ENCODE measurements at regions of chr1 and their contacts with region 1.

Region 1: GRCh38 chr1:206808615-206809014 is 36.3 kb upstream of the IL10 start:
- DNase-seq: no peak
- H3K4me3 ChIP-seq: no peak overlapping the region
- CTCF ChIP-seq: peak; percentile 49

Region 2: DNA sequence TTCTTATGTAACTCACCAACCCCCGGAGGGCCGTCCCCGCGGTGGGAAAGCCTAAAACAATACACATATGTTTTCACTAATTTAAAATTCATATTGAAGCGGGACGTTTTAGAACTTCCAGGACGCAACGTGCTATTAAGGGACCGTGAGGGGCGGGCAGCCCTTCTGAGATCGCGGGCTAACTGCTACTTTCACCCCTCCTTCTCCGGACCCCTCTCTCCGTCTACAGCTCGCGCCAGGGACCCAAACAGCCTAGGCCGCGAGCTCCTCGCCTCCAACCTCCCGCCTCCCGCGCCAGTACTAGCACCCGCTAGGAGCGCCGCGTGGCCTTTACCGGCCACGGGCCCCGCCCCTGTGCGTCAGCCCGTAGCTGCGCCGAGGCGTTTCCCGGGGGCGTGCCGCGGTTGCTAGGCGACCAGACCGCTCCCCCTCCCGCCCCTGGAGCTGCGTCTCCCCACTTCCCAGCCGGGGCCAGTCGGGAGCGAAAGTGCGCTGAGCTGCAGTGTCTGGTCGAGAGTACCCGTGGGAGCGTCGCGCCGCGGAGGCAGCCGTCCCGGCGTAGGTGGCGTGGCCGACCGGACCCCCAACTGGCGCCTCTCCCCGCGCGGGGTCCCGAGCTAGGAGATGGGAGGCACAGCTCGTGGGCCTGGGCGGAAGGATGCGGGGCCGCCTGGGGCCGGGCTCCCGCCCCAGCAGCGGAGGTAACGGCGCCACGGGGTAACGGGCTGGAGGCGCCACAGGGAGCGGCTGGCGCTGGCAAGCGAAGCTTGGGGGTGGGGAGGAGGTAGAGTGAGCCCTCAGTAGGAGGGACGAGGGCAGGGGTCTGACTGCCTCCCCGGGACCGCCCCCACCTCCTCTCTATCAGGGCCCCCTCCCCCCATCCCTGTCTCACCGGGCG is 173.3 kb before region 1 on chr1 and contains the start of gene DYRK3:
- CTCF ChIA-PET with region 1: interaction called, 15 read pairs
- POLR2A ChIA-PET with region 1: no interaction called
- DNase-seq: no peak
- H3K4me3 ChIP-seq: peak within 1 kb of the TSS; percentile 86
- CTCF ChIP-seq: no peak

Region 3: DNA sequence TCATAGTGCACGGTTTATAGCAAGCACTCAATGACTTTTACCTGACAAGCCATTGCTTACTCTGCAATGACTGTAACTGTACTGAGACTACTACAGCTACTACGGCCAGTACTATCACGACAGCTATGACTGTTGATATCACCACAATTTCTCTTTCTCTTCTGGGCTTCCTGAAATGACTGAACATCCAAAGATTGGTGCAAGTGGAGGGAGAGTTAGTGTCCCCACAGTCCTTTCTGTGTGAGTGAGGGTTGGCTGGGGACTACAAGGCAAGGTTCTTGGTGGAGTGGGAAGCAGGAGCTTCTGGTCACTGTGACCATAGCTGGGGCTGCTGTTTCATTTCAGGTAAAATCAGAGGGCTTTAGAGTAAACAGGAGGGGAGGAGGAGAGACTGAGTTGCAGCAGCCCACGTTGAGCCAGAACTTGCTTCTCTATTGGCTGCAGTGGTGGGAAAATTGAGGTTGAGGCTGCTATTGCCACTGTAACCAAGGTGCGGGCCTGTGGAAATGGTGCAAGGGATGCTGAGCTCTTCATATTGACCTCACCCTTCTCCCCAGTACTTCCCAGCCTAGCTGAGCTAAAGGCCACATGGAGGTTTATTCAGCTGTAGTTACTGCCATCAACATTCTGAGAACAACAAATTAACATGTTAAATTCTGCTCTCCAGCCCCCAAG is 22.3 kb before region 1 on chr1:
- CTCF ChIA-PET with region 1: interaction called, 11 read pairs
- POLR2A ChIA-PET with region 1: no interaction called
- DNase-seq: no peak
- H3K4me3 ChIP-seq: no peak overlapping the region
- CTCF ChIP-seq: no peak

Region 4: DNA sequence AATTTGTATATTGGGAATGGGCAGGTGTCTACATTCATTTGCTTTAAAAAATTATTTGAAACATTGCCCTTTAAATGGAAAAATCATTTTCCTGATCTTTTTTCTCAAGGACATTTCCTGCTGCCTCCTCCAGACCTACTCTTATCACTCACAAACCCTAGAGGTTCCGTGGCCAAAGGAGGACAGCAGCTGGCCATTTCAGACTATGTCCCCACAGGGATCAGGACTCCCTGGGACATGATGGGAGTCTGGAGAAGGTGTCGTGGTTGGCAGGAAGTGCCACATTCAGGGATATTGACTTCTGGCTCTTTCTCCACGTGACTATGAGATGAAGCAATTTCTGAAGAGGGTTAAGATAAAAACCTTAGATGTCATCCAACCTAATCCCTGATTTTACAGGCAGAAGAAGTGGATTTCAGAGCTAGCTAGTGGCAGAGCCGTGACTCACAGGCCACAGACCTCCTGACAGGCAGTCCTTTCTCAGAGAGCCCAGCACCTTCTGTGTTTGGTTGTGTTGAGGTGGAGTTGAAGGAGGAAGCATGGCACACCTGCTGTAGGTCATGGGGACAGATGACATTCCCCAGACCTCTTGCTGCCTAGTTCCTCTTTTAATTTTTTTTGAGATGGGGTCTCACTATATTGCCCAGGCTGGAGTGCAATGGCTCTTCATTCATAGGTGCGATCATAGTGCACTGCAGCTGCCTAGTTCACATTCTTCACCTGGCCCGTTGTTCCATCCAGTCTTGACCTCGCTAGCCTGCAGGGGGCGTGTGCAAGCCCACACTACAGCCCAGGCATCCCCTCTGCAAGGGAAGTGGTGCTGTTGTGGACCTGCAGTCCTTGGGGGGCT is 10.9 kb before region 1 on chr1:
- CTCF ChIA-PET with region 1: interaction called, 23 read pairs
- POLR2A ChIA-PET with region 1: no interaction called
- DNase-seq: no peak
- H3K4me3 ChIP-seq: no peak overlapping the region
- CTCF ChIP-seq: peak; percentile 50

Region 5: GRCh38 chr1:206826405-206826804 is 17.8 kb after region 1 on chr1:
- CTCF ChIA-PET with region 1: interaction called, 61 read pairs
- POLR2A ChIA-PET with region 1: no interaction called
- DNase-seq: no peak
- H3K4me3 ChIP-seq: no peak overlapping the region
- CTCF ChIP-seq: no peak

Region 6: DNA sequence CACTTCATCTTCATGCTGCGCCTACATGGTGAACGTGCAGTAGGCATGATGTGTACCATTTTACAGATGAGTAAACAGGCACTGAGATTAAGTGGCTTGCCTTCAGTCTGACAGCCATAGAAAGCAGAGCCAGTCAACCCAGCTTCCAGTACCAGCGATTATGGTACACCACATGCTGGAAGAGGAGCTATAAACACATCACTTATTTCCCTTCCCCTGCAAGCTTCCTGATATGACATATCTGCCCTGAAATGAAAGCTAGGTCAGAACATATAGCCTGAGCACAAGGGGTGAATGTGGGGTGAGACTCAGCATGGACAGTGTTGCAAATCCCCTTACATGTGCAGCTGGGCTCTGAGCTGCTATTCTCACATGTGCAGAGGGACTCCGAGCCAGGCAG is 23.0 kb after region 1 on chr1:
- CTCF ChIA-PET with region 1: interaction called, 25 read pairs
- POLR2A ChIA-PET with region 1: no interaction called
- DNase-seq: no peak
- H3K4me3 ChIP-seq: no peak overlapping the region
- CTCF ChIP-seq: no peak

Measured in AG04449 (cell line).